CD8-positive, alpha-beta memory T cell (primary cell): ENCODE measurements at regions of chr12 and their contacts with region 1.

Region 1: DNA sequence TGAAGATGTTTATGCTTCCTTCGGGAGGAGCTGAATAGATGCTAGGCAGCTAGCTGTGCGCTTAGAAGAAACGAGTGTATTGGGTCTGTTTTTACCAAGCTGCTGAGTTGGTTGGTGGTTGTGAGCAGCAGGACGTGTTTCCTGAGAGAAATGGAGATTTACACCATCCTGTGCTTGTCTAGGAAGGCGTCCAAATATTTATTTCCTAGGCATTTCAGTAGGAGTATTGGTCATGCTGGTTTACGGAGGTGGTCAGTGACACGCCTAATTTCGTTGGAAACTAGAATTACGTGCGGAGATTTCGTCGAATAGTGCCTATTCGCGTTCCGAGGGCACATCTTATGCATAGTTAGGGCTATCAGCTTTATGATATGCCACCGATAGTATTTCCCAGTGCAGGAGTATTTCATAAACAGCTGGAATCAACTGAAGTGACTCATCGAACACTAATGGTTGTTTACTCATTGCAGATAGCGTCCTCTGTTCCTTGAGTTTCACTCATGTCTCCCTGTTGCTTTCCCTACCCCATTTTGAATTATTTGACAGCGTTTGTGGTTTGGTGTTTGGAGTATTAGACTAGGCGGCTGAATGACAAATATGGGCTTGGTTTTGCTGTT is 780 bp downstream of the TBC1D15 start:
- DNase-seq: no peak
- H3K4me3 ChIP-seq: peak overlapping the region; percentile 78
- H3K4me3 Mint-ChIP-seq: peak overlapping the region; percentile 89 to 93 (median 92)
- H3K27ac ChIP-seq: peak overlapping the region; percentile 97
- H3K27ac Mint-ChIP-seq: peak overlapping the region; percentile 92 to 100 (median 98)
- H3K4me1 ChIP-seq: peaks cover 48% of the 10 kb centered on the region
- H3K4me1 Mint-ChIP-seq: peaks cover 39 to 48% (median 46%) of the 10 kb centered on the region in 3 donors
- H3K27me3 ChIP-seq: no peaks in the 10 kb centered on the region
- H3K27me3 Mint-ChIP-seq: peaks cover 2 to 5% of the 10 kb centered on the region in 2 donors

Region 2: GRCh38 chr12:71663561-71664294 is 176.6 kb before region 1 on chr12 and contains the start of gene ZFC3H1:
- CTCF ChIA-PET with region 1: interaction called, 8 read pairs
- POLR2A ChIA-PET with region 1: interaction called, 20 read pairs
- DNase-seq: peak; percentile 85 to 96 (median 95)
- H3K4me3 ChIP-seq: peak within 1 kb of the TSS; percentile 90
- H3K4me3 Mint-ChIP-seq: peak within 1 kb of the TSS; percentile 94 to 100 (median 99)
- H3K27ac ChIP-seq: peak within 1 kb of the TSS; percentile 99
- H3K27ac Mint-ChIP-seq: peak within 1 kb of the TSS; percentile 97 to 100 (median 100)
- H3K4me1 ChIP-seq: peaks cover 33% of the 10 kb centered on the region
- H3K4me1 Mint-ChIP-seq: peaks cover 49 to 63% (median 59%) of the 10 kb centered on the region in 3 donors
- H3K27me3 ChIP-seq: no peaks in the 10 kb centered on the region
- H3K27me3 Mint-ChIP-seq: peaks cover 0 to 3% of the 10 kb centered on the region in 2 donors
- total RNA-seq, gene ZFC3H1: 37.5 to 42.6 TPM

Region 3: DNA sequence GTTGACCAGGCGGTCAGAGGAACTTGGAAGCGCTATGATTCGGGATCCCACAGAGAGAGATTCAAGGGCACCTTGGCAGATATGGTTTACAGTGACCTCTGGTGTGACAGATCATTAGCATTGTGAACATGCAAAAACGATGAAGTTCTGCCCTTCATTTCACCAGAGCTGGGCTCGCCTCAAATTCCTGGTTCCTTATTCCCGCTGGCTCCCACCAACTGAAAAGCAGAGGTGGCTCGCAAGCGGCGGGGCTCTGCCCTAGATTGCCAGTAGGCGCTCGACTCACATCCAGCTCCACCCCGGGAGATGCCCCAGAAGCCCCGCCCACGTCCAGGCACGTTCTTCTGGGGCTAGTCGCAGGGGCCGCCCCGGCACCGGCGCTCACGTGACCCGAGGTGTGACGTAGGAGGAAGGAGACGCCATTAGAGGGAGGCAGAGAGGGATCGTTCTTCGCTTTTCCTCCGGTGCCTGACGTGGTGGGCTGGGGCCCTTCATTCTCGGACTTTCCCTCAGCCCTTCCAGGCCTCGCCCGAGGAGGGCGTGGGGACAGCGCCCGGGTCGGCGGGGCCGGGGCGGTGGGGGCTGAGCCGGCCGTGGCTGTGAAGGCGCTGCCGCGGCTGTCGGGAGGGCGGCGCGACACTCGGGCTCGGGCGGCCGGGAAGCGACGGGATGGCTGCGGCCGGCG is 85.7 kb before region 1 on chr12 and contains the start of gene RAB21:
- CTCF ChIA-PET with region 1: interaction called, 5 read pairs
- POLR2A ChIA-PET with region 1: interaction called, 13 read pairs
- DNase-seq: peak; percentile 96 to 99 (median 99)
- H3K4me3 ChIP-seq: peak within 1 kb of the TSS; percentile 87
- H3K4me3 Mint-ChIP-seq: peak within 1 kb of the TSS; percentile 93 to 99 (median 94)
- H3K27ac ChIP-seq: peak within 1 kb of the TSS; percentile 91
- H3K27ac Mint-ChIP-seq: peak within 1 kb of the TSS; percentile 96 to 99 (median 99)
- H3K4me1 ChIP-seq: peaks cover 22% of the 10 kb centered on the region
- H3K4me1 Mint-ChIP-seq: peaks cover 38 to 51% (median 48%) of the 10 kb centered on the region in 3 donors
- H3K27me3 ChIP-seq: no peaks in the 10 kb centered on the region
- H3K27me3 Mint-ChIP-seq: peaks cover 12 to 16% of the 10 kb centered on the region in 2 donors
- total RNA-seq, gene RAB21: 100 to 106 TPM